MCF 10A (cell line): ENCODE measurements at regions of chr15 and their contacts with region 1.

Region 1: GRCh38 chr15:67839929-67840748 is at the start of gene RNU6-1:
- DNase-seq: peak; percentile 87
- H3K4me3 Mint-ChIP-seq: peak within 1 kb of the TSS; percentile 81
- H3K27ac Mint-ChIP-seq: peak within 1 kb of the TSS; percentile 94
- H3K4me1 Mint-ChIP-seq: no peaks in the 10 kb centered on the region
- H3K27me3 Mint-ChIP-seq: no peaks in the 10 kb centered on the region
- CTCF ChIP-seq: no peak
- total RNA-seq, gene RNU6-1: not detected in 2 replicates

Region 2: DNA sequence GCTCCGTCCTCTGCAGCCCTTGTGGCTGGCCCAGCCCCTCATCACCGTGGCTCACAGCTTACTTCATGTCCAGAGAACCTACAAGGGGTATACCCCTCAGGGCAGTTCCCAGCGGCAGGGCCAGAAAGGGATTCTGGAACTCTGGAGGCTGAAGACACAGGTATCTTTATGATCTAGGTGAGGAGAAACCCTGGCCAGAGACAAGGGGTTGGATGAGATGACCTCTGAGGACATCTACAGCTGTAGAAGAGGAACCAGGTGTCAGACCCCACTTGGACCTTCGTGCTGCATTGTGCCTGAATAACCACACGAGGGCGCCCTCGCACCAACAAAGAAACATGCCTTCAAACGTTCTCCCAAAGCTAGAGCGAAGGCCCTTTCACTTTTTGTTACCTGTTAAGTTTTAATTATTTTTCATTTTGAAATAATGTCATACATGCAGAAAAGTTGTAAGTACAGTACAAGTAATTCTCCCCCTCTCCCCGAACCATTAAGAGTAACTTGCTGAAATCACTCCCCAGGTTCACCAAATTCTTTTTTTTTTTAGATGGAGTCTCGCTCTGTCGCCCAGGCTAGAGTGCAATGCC is 893.5 kb before region 1 on chr15:
- CTCF ChIA-PET with region 1: no interaction called
- POLR2A ChIA-PET with region 1: no interaction called
- intact Hi-C with region 1: loop called (anchors 1 kb)
- DNase-seq: peak; percentile 83
- H3K4me3 Mint-ChIP-seq: no peak overlapping the region
- H3K27ac Mint-ChIP-seq: no peak overlapping the region
- H3K4me1 Mint-ChIP-seq: peaks cover 7% of the 10 kb centered on the region
- H3K27me3 Mint-ChIP-seq: no peaks in the 10 kb centered on the region
- CTCF ChIP-seq: peak; percentile 94

Region 3: GRCh38 chr15:67303490-67304363 is 536.4 kb before region 1 on chr15:
- CTCF ChIA-PET with region 1: no interaction called
- POLR2A ChIA-PET with region 1: no interaction called
- intact Hi-C with region 1: loop called (anchors 10 kb)
- DNase-seq: peak; percentile 63
- H3K4me3 Mint-ChIP-seq: no peak overlapping the region
- H3K27ac Mint-ChIP-seq: no peak overlapping the region
- H3K4me1 Mint-ChIP-seq: no peaks in the 10 kb centered on the region
- H3K27me3 Mint-ChIP-seq: no peaks in the 10 kb centered on the region
- CTCF ChIP-seq: peak; percentile 66

Region 4: DNA sequence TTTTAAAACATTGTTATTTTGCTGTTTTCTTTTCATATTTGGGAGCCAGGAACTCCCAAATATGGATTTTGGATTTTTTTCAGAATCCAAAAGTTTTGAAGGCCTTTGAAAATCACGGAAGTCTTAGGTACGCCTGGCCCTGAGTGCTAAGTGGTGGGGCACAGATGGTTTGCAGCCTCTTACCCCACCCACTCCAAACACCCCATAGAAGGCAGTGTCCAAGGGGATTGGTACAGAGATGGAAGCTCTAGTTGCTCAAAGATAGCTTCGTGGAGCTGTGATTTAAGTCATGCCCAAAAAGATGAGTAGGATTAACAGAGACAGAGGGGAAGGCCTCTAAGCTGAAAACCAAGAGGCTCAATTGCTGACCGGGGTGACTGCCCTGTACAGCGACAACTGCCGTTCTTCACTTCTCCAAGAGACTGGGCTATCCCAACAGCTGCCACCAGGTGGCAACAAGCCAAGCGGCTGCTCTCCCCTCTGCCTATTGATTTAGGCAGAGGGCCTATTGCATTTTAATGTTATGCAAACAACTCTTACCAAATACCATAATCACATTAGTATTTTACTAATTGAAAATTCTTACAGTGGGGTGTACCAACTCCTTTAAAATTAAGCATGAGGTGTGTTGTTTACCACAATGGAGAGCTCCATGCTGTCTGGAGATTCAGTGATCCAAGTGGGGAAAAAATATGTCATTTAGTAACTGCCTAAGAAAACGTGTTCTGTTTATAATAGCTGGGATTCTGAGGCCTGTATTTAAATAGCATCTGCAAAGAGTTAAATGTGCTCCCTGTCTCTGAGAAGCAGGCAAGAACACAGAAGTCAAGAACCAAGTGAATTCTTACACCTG is 383.2 kb before region 1 on chr15:
- CTCF ChIA-PET with region 1: interaction called, 13 read pairs
- POLR2A ChIA-PET with region 1: interaction called, 5 read pairs
- intact Hi-C with region 1: loop called (anchors 1 kb)
- DNase-seq: peak; percentile 74
- H3K4me3 Mint-ChIP-seq: no peak overlapping the region
- H3K27ac Mint-ChIP-seq: no peak overlapping the region
- H3K4me1 Mint-ChIP-seq: no peaks in the 10 kb centered on the region
- H3K27me3 Mint-ChIP-seq: no peaks in the 10 kb centered on the region
- CTCF ChIP-seq: peak; percentile 91

Region 5: GRCh38 chr15:67501177-67501835 is 338.8 kb before region 1 on chr15:
- CTCF ChIA-PET with region 1: interaction called, 13 read pairs
- POLR2A ChIA-PET with region 1: no interaction called
- intact Hi-C with region 1: loop called (anchors 2 kb)
- DNase-seq: peak; percentile 25
- H3K4me3 Mint-ChIP-seq: no peak overlapping the region
- H3K27ac Mint-ChIP-seq: no peak overlapping the region
- H3K4me1 Mint-ChIP-seq: peaks cover 13% of the 10 kb centered on the region
- H3K27me3 Mint-ChIP-seq: no peaks in the 10 kb centered on the region
- CTCF ChIP-seq: peak; percentile 44

Region 6: DNA sequence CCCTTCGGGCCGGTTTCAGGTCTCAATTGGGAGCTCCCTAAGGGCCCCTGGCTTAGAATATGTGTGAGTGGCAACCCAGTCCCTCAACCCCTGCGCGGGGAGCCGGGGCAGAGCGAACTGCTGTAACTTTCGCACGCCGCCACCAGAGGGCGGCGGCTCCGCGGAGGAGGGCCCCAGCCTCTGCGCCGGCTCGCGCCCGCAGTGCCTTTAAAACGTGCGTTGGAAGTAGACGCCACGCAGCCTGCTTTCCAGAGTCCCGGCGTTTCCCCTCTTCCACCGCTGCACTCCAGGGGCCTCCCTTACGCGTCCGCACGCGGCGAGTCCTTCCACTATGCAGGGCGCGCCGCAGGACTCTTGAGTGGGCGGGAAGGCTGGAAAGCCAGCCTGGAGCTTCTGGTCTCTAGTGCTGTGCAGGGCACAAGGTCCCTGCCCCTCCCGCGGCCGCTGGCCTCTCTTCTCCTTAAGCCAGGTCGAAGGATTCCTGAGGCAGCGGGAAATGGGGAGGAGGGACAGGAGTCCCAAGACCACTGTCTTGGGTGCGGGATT is 23.4 kb after region 1 on chr15:
- CTCF ChIA-PET with region 1: no interaction called
- POLR2A ChIA-PET with region 1: no interaction called
- intact Hi-C with region 1: no loop called
- DNase-seq: peak; percentile 78
- H3K4me3 Mint-ChIP-seq: peak overlapping the region; percentile 66
- H3K27ac Mint-ChIP-seq: peak overlapping the region; percentile 37
- H3K4me1 Mint-ChIP-seq: peaks cover 14% of the 10 kb centered on the region
- H3K27me3 Mint-ChIP-seq: no peaks in the 10 kb centered on the region
- CTCF ChIP-seq: peak; percentile 95

Region 7: GRCh38 chr15:67998599-67999122 is 158.5 kb after region 1 on chr15:
- CTCF ChIA-PET with region 1: no interaction called
- POLR2A ChIA-PET with region 1: no interaction called
- intact Hi-C with region 1: loop called (anchors 1 kb)
- DNase-seq: peak; percentile 80
- H3K4me3 Mint-ChIP-seq: peak overlapping the region; percentile 53
- H3K27ac Mint-ChIP-seq: peak overlapping the region; percentile 50
- H3K4me1 Mint-ChIP-seq: peaks cover 30% of the 10 kb centered on the region
- H3K27me3 Mint-ChIP-seq: no peaks in the 10 kb centered on the region
- CTCF ChIP-seq: no peak

Region 8: GRCh38 chr15:68154923-68155559 is 314.9 kb after region 1 on chr15:
- CTCF ChIA-PET with region 1: interaction called, 5 read pairs
- POLR2A ChIA-PET with region 1: no interaction called
- intact Hi-C with region 1: loop called (anchors 2 kb)
- DNase-seq: peak; percentile 71
- H3K4me3 Mint-ChIP-seq: no peak overlapping the region
- H3K27ac Mint-ChIP-seq: no peak overlapping the region
- H3K4me1 Mint-ChIP-seq: peaks cover 20% of the 10 kb centered on the region
- H3K27me3 Mint-ChIP-seq: no peaks in the 10 kb centered on the region
- CTCF ChIP-seq: peak; percentile 79